ENCODE measurements at regions of chr3 and their contacts with region 1.

Region 1: GRCh38 chr3:134212906-134213665 is 37.6 kb downstream of the RYK start:
- DNase-seq: no peak
- H3K4me3 ChIP-seq: no peak overlapping the region
- CTCF ChIP-seq: peak; percentile 96

Region 2: DNA sequence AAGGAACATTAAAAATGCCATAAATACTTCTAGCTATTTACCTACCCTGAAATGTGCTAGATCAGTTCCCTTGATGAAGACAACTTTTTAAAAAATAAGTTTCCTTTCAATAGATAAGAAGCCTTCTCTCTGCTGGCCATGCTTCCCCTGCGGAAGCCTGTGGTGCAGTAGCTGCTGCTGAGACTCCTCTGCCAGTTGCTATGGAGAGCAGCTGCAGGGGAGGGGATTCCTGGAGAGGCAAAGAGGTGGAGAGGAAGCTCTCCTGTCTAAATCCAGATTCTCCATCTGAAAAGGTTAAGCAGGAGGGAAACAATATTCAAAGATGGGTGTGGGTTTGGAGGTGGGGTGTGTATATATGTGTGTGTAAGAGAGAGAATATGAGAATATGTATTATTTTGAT is 883.0 kb before region 1 on chr3:
- CTCF ChIA-PET with region 1: no interaction called
- POLR2A ChIA-PET with region 1: no interaction called
- DNase-seq: no peak
- H3K4me3 ChIP-seq: no peak overlapping the region
- CTCF ChIP-seq: no peak

Region 3: DNA sequence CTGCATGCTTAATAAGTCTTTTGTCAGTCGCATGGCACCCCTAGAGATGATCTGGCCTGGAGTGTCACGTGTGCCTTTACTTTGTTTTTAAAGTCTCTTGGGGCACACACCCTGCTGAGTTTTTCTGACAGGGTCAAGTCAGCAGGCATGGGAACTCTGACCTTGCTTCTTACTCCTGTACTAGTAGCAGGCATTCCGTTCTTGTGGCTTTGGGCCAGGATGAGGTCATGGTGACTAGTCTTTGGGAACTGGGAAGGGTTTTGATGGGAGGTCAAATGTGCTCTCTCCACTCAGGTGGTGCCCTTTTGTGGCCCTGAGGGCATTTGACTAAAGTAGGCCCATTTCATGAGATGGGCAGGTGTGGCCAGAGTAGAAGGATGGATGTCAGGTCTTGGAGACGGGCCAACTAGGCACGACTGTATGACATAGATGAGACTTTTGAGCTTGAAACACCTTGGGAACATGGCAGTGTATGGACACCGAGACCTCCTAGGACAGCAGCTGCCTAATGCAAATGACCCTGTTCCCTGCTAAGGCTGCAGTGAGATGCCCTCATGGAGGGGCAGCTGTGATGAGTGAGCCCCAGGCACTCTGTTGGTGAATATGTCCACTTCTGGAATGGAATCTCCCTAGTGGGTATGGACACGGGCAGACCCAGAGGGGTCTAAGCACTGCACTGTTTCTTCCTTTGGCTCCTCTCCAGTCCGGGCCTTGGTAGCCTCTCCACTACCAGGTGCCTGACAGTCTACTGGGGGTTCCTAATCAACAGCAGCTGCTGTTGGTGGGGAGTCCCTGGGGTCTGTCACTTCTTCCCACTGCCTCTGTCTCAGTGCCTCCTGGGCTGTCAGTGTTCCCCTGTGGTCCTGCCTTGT is 391.1 kb before region 1 on chr3:
- CTCF ChIA-PET with region 1: interaction called, 22 read pairs
- POLR2A ChIA-PET with region 1: no interaction called
- DNase-seq: no peak
- H3K4me3 ChIP-seq: no peak overlapping the region
- CTCF ChIP-seq: no peak

Region 4: DNA sequence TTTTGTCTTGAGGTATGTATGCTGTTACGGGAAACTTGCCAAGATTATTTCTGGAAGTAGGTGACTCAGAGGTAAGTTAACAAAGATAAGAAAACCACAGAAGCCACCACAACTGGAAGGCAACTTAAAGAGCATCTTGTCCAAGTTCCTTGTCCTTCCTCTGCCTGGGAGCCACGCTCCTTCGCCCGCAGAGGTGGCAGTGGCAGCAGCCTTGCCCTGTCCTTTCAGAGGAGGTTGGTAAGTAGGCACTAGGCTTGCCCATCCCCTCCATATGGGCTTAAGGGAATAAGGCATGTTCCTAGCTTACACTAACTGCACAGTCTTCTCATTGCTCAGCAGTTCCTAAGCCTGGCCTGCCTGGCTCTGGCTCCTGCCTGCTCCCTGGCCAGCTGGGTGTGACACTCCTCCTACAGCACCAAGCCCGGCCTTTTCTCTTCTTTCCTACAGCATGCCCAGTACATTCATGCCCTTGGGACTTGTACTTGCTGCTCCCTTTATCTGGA is 269.4 kb before region 1 on chr3:
- CTCF ChIA-PET with region 1: interaction called, 17 read pairs
- POLR2A ChIA-PET with region 1: no interaction called
- DNase-seq: peak; percentile 68
- H3K4me3 ChIP-seq: no peak overlapping the region
- CTCF ChIP-seq: no peak

Region 5: DNA sequence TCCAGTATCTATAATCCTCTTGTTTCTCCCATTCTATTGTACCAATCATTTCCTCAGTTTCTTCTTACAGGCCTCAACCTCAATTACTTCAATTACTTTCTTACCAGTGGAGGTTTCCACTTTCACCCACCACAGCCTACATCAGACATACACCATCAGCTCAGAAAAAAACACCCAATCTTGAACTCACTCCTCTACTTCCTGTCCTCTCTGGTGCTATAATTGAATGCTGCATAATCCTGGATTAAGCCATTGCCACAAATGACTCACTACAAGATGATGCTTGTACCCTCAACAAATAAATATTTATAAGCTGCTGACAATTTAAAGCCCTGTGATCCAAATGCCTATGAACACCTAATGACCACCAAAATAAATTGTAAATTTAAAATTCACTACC is 19.1 kb after region 1 on chr3:
- CTCF ChIA-PET with region 1: interaction called, 162 read pairs
- POLR2A ChIA-PET with region 1: no interaction called
- DNase-seq: no peak
- H3K4me3 ChIP-seq: no peak overlapping the region
- CTCF ChIP-seq: no peak

Region 6: GRCh38 chr3:134277066-134277660 is 64.1 kb after region 1 on chr3:
- CTCF ChIA-PET with region 1: interaction called, 13 read pairs
- POLR2A ChIA-PET with region 1: no interaction called
- DNase-seq: no peak
- H3K4me3 ChIP-seq: no peak overlapping the region
- CTCF ChIP-seq: no peak

Region 7: GRCh38 chr3:134308350-134308891 is 95.3 kb after region 1 on chr3:
- CTCF ChIA-PET with region 1: interaction called, 209 read pairs
- POLR2A ChIA-PET with region 1: no interaction called
- DNase-seq: no peak
- H3K4me3 ChIP-seq: peak overlapping the region; percentile 33
- CTCF ChIP-seq: peak; percentile 93

Region 8: GRCh38 chr3:134496471-134497071 is 283.5 kb after region 1 on chr3:
- CTCF ChIA-PET with region 1: interaction called, 13 read pairs
- POLR2A ChIA-PET with region 1: no interaction called
- DNase-seq: no peak
- H3K4me3 ChIP-seq: no peak overlapping the region
- CTCF ChIP-seq: no peak